Activated CD8-positive, alpha-beta T cell treated with anti-CD3 and anti-CD28 coated beads for 36 hours (primary cell): ENCODE measurements at regions of chr18 and their contacts with region 1.

Region 1: DNA sequence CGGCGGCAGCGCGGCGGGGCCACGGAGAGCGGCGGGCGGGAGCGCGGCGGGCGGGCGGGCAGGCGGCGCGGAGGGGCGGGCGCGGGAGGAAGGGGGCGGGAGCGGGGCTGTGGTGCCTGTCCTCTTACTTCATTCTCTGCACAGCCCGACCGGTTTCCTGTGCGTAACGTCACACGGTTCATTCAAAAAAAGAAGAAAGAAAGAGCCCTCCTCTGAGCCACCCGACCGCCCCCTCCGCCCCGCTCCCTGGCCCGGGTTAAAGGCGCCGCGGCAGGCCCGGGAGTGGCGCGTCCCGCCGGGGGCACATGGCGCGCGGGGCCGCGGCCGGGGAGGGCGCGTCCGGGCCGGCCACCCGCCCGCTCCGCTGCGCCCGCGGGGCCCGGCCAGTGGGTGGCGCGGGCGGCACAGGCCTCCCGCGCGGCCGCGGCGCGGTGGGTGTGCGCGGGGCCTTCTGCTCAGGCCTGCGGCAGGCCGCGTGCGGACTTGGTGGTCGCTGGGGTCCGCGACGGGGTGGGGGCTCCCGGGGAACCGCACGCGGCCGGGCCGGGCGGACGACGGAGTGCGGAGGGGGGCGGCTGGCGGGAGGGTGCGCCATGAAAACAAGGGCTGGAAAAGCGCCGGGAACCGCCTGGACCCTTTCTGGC is 599 bp upstream of the BCL2 start:
- DNase-seq: peak; percentile 92
- ATAC-seq: peak; percentile 77
- H3K4me3 Mint-ChIP-seq: peak overlapping the region; percentile 93
- H3K27ac Mint-ChIP-seq: peak overlapping the region; percentile 94
- H3K4me1 Mint-ChIP-seq: peaks cover 22% of the 10 kb centered on the region
- H3K27me3 Mint-ChIP-seq: no peaks in the 10 kb centered on the region
- CTCF ChIP-seq: no peak

Region 2: DNA sequence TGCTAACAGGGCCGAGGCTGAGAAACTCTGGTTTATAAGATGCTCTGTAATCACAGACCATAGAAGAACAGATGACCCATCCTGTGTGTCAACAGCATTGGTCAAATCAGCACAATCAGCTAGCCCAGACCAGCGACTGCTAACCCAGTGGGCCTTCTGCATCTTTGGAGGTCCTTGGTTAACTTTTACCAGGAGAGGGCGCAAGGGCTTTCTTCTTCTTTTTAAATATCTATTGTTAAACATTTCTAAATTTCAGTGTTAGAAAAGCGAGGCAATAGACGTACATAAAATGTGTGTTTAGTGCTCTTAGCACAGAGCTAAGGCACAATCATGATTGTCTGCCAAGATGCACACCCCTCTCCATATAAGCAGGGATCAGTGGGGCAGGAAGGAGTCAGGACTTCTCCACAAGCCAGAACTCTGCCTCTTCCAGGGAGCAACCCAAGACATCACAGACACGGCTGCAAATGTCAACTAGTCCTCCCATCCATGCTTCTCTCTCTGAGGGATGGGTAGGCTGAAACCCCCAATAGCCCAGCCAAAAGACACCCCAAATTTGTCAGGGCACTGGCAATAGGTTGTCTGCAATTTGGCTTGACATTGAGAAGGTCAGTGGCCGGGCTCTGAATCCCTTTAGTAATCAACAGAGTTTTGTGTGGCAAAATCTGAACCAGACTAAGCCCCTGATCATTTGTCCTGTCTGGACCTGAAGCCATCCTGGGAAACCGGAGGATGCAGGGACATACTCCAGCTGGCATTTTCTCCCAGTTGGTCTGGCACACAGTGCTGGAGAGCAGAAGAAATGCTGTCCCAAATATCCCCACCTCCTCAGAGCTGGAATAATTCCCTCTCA is 188.8 kb before region 1 on chr18:
- CTCF ChIA-PET with region 1: interaction called, 36 read pairs
- POLR2A ChIA-PET with region 1: interaction called, 7 read pairs
- intact Hi-C with region 1: loop called (anchors 2 kb)
- DNase-seq: peak; percentile 79
- ATAC-seq: peak; percentile 59
- H3K4me3 Mint-ChIP-seq: no peak overlapping the region
- H3K27ac Mint-ChIP-seq: peak overlapping the region; percentile 79
- H3K4me1 Mint-ChIP-seq: peaks cover 41% of the 10 kb centered on the region
- H3K27me3 Mint-ChIP-seq: no peaks in the 10 kb centered on the region
- CTCF ChIP-seq: peak; percentile 83

Region 3: GRCh38 chr18:63161761-63162195 is 158.4 kb before region 1 on chr18:
- CTCF ChIA-PET with region 1: interaction called, 10 read pairs
- POLR2A ChIA-PET with region 1: interaction called, 68 read pairs
- intact Hi-C with region 1: loop called (anchors 2 kb)
- DNase-seq: peak; percentile 94
- ATAC-seq: peak; percentile 75
- H3K4me3 Mint-ChIP-seq: peak overlapping the region; percentile 85
- H3K27ac Mint-ChIP-seq: peak overlapping the region; percentile 99
- H3K4me1 Mint-ChIP-seq: peaks cover 92% of the 10 kb centered on the region
- H3K27me3 Mint-ChIP-seq: no peaks in the 10 kb centered on the region
- CTCF ChIP-seq: no peak

Region 4: DNA sequence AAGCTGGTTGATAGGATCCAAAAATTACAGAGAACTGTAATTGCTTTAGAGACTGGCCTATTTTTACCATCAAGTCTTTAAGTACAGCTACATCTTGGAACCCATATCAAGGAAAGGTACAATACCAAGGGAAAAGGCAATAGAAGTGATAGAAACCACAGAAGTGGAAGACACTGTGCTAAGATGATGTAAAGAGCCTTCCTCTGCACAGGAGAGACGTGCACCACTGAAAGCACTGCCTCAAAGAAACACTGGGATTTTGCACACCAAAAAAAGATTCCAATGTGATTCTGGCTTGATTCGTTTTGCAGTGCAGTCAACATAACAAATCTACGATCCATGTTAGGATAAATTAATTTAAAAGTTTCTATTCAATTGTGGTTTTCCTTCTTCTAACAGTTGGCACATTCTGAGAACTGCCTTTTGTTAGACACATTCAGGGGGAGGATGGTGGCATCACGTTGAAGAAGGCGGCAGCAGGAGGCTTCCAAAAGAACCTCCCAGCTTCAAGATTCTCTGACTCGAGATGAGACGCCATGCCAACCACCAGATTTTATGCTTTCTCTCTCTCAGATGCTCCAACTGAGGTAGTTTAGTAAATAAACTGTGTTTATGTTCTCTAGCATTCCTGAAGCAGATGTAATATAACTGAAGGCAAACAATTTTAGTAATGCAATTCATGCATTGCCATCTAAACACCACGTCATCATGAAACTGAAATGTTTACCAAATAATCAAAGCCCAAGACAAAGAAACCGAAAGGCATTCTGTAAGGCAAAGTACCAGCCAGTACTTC is 103.5 kb before region 1 on chr18:
- CTCF ChIA-PET with region 1: interaction called, 71 read pairs
- POLR2A ChIA-PET with region 1: interaction called, 22 read pairs
- intact Hi-C with region 1: no loop called
- DNase-seq: peak; percentile 65
- ATAC-seq: peak; percentile 31
- H3K4me3 Mint-ChIP-seq: peak overlapping the region; percentile 53
- H3K27ac Mint-ChIP-seq: peak overlapping the region; percentile 92
- H3K4me1 Mint-ChIP-seq: peaks cover 94% of the 10 kb centered on the region
- H3K27me3 Mint-ChIP-seq: no peaks in the 10 kb centered on the region
- CTCF ChIP-seq: no peak

Region 5: DNA sequence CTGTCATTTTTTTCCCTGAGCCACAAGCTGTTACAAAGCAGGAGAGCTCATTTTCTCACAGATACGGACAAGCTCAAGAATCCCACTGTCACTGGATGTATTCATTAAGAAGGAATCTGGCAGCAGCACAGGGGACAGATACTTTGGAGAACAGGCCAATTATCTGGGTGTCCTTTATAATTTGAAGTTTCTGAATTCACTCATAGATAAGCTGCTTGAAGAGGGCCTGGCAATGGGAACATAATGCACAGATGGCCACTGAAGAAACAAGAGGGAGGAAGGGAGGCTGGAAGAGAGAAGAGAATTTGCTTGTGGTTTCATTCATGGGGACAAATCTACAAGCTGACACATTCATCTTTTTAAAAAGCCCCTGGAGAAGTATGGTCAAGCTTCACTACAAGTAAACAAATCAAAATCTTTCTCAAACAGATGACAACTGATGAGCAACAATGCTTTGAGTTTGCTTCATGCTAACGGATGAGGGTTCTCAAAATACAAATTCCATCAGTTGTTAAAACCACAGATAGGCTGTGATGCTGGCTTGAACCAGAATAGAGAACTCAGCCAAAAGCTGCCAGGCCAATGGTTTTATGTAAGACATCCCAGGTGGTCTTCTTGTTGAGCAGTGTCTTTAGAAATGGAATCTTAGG is 12.5 kb before region 1 on chr18:
- CTCF ChIA-PET with region 1: interaction called, 26 read pairs
- POLR2A ChIA-PET with region 1: interaction called, 23 read pairs
- intact Hi-C with region 1: no loop called
- DNase-seq: no peak
- ATAC-seq: no peak
- H3K4me3 Mint-ChIP-seq: no peak overlapping the region
- H3K27ac Mint-ChIP-seq: no peak overlapping the region
- H3K4me1 Mint-ChIP-seq: peaks cover 82% of the 10 kb centered on the region
- H3K27me3 Mint-ChIP-seq: no peaks in the 10 kb centered on the region
- CTCF ChIP-seq: no peak

Region 6: GRCh38 chr18:63439334-63439733 is 119.2 kb after region 1 on chr18:
- CTCF ChIA-PET with region 1: interaction called, 34 read pairs
- POLR2A ChIA-PET with region 1: no interaction called
- intact Hi-C with region 1: no loop called
- DNase-seq: peak; percentile 58
- ATAC-seq: peak; percentile 75
- H3K4me3 Mint-ChIP-seq: no peak overlapping the region
- H3K27ac Mint-ChIP-seq: no peak overlapping the region
- H3K4me1 Mint-ChIP-seq: no peaks in the 10 kb centered on the region
- H3K27me3 Mint-ChIP-seq: peaks cover 2% of the 10 kb centered on the region
- CTCF ChIP-seq: peak; percentile 92